ENCODE measurements at regions of chr11 and their contacts with region 1.

Region 1: GRCh38 chr11:78564490-78565467 is 9.9 kb downstream of the NARS2 start:
- DNase-seq: no peak

Region 2: DNA sequence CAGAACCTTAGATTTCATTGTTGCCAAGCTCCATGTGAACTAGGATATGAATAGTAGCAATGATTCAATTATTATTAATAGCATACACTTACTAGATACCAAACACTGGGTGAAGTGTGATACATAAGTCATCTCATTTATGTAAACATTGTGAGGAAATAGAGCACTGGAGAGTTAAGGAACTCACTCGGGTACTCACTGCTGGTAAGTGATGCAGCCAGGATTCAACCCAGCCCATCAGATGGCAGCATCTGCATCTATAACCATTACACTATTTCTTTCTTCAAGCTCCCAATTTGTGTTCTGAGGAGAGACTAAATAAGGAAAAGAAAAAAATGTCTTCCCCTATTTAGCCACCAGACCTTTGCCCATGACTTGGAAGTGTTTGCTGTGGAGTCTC is 415.1 kb before region 1 on chr11:
- intact Hi-C with region 1: loop called (anchors 5 kb)
- DNase-seq: no peak

Region 3: DNA sequence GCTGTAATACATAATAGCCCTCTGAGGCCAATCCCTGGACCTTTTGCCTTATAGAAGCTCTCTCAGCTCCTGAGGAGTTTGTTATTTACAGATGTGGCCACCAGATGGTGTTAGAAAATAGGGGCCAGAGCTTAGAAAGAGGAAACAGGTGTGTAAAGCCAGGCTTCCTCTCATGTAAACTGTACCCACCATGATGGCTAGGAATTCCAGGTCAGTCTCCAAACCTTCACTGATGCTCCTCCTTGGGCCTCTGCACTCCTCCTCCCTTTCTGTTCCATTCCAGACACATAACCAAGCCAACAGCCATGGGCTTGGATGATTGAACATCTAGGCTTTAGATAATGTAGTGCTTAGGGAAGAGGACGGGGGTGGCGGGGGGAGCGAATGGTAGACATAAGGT is 336.3 kb before region 1 on chr11:
- intact Hi-C with region 1: loop called (anchors 2 kb)
- DNase-seq: no peak